GM12878 (cell line): ENCODE measurements at regions of chr14 and their contacts with region 1.

Region 1: GRCh38 chr14:70816525-70816924 is 7.2 kb upstream of the MAP3K9 start:
- DNase-seq: no peak
- ATAC-seq: no peak
- H3K4me3 ChIP-seq: no peak overlapping the region
- H3K27ac ChIP-seq: no peak overlapping the region
- H3K4me1 ChIP-seq: peaks cover 10% of the 10 kb centered on the region
- H3K27me3 ChIP-seq: no peaks in the 10 kb centered on the region
- CTCF ChIP-seq: no peak
- EP300 ChIP-seq: no peak
- POLR2A ChIP-seq: no peak
- RAD21 ChIP-seq: no peak

Region 2: GRCh38 chr14:70378696-70379095 is 437.8 kb before region 1 on chr14:
- CTCF ChIA-PET with region 1: no interaction called
- POLR2A ChIA-PET with region 1: no interaction called
- RAD21 ChIA-PET with region 1: no interaction called
- SMC1A ChIA-PET with region 1: no interaction called
- in situ Hi-C with region 1: no loop called
- intact Hi-C with region 1: no loop called
- DNase-seq: no peak
- ATAC-seq: no peak
- H3K4me3 ChIP-seq: no peak overlapping the region
- H3K27ac ChIP-seq: no peak overlapping the region
- H3K4me1 ChIP-seq: no peaks in the 10 kb centered on the region
- H3K27me3 ChIP-seq: no peaks in the 10 kb centered on the region
- CTCF ChIP-seq: no peak
- EP300 ChIP-seq: no peak
- POLR2A ChIP-seq: no peak
- RAD21 ChIP-seq: no peak

Region 3: DNA sequence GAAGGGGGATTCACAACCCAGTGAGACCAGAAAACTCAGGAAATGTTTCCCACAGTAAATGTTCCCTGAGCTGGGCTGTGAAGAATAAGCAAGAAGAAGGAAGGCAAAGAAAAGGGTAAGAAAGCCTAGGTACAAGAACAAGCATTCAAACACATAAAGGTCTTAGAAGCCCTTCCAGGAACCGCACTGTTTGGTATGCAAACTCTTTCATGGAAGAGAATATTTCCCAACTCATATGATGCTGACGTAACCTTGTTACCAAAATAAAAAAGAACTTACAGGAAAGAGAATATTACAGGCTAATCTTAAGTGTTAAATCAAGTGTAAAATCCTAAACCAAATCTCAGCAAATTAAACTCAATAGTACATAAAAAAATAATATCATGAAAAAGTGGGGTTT is 239.6 kb before region 1 on chr14:
- CTCF ChIA-PET with region 1: no interaction called
- POLR2A ChIA-PET with region 1: no interaction called
- RAD21 ChIA-PET with region 1: no interaction called
- SMC1A ChIA-PET with region 1: no interaction called
- in situ Hi-C with region 1: no loop called
- intact Hi-C with region 1: no loop called
- DNase-seq: no peak
- ATAC-seq: no peak
- H3K4me3 ChIP-seq: no peak overlapping the region
- H3K27ac ChIP-seq: no peak overlapping the region
- H3K4me1 ChIP-seq: no peaks in the 10 kb centered on the region
- H3K27me3 ChIP-seq: no peaks in the 10 kb centered on the region
- CTCF ChIP-seq: no peak
- EP300 ChIP-seq: no peak
- POLR2A ChIP-seq: no peak
- RAD21 ChIP-seq: no peak

Region 4: GRCh38 chr14:70622111-70622712 is 194.3 kb before region 1 on chr14:
- CTCF ChIA-PET with region 1: interaction called, 71 read pairs
- POLR2A ChIA-PET with region 1: no interaction called
- RAD21 ChIA-PET with region 1: interaction called, 6 read pairs
- SMC1A ChIA-PET with region 1: interaction called, 37 read pairs
- in situ Hi-C with region 1: loop called (anchors 5 kb)
- intact Hi-C with region 1: loop called (anchors 1 kb)
- DNase-seq: no peak
- ATAC-seq: peak; percentile 93
- H3K4me3 ChIP-seq: no peak overlapping the region
- H3K27ac ChIP-seq: no peak overlapping the region
- H3K4me1 ChIP-seq: no peaks in the 10 kb centered on the region
- H3K27me3 ChIP-seq: no peaks in the 10 kb centered on the region
- CTCF ChIP-seq: peak; percentile 87 to 91 (median 90)
- EP300 ChIP-seq: no peak
- POLR2A ChIP-seq: no peak
- RAD21 ChIP-seq: peak; percentile 97

Region 5: GRCh38 chr14:70714055-70714621 is 102.4 kb before region 1 on chr14:
- CTCF ChIA-PET with region 1: interaction called, 36 read pairs
- POLR2A ChIA-PET with region 1: no interaction called
- RAD21 ChIA-PET with region 1: interaction called, 16 read pairs
- SMC1A ChIA-PET with region 1: interaction called, 4 read pairs
- in situ Hi-C with region 1: no loop called
- intact Hi-C with region 1: loop called (anchors 1 kb)
- DNase-seq: peak; percentile 50
- ATAC-seq: peak; percentile 63
- H3K4me3 ChIP-seq: no peak overlapping the region; the same call in 1 of the 2 replicates
- H3K27ac ChIP-seq: peak overlapping the region; percentile 52; the same call in 1 of the 2 replicates
- H3K4me1 ChIP-seq: peaks cover 6% of the 10 kb centered on the region
- H3K27me3 ChIP-seq: no peaks in the 10 kb centered on the region
- CTCF ChIP-seq: peak; percentile 42 to 55 (median 51); a peak in 5 of 6 replicates
- EP300 ChIP-seq: no peak
- POLR2A ChIP-seq: no peak
- RAD21 ChIP-seq: peak; percentile 72

Region 6: GRCh38 chr14:70827396-70828151 is 11.0 kb after region 1 on chr14:
- CTCF ChIA-PET with region 1: interaction called, 28 read pairs
- POLR2A ChIA-PET with region 1: no interaction called
- RAD21 ChIA-PET with region 1: interaction called, 9 read pairs
- SMC1A ChIA-PET with region 1: interaction called, 10 read pairs
- in situ Hi-C with region 1: no loop called
- intact Hi-C with region 1: no loop called
- DNase-seq: no peak
- ATAC-seq: no peak
- H3K4me3 ChIP-seq: no peak overlapping the region
- H3K27ac ChIP-seq: no peak overlapping the region
- H3K4me1 ChIP-seq: peaks cover 4% of the 10 kb centered on the region; the same call in 1 of the 2 replicates
- H3K27me3 ChIP-seq: peaks cover 0 to 5% of the 10 kb centered on the region in 2 experiments; a peak in 1 of 4 replicates
- CTCF ChIP-seq: no peak
- EP300 ChIP-seq: no peak
- POLR2A ChIP-seq: no peak
- RAD21 ChIP-seq: no peak

Region 7: GRCh38 chr14:70907176-70907995 is 90.9 kb after region 1 on chr14 and contains the start of gene PCNX1:
- CTCF ChIA-PET with region 1: interaction called, 69 read pairs
- POLR2A ChIA-PET with region 1: interaction called, 3 read pairs
- RAD21 ChIA-PET with region 1: interaction called, 26 read pairs
- SMC1A ChIA-PET with region 1: interaction called, 14 read pairs
- in situ Hi-C with region 1: no loop called
- intact Hi-C with region 1: loop called (anchors 2 kb)
- DNase-seq: no peak
- ATAC-seq: peak; percentile 75
- H3K4me3 ChIP-seq: peak within 1 kb of the TSS; percentile 91
- H3K27ac ChIP-seq: peak within 1 kb of the TSS; percentile 87
- H3K4me1 ChIP-seq: 0 out of 2 replicates have a peak, but pooled peaks cover 5% of the 10 kb centered on the region
- H3K27me3 ChIP-seq: no peaks in the 10 kb centered on the region
- CTCF ChIP-seq: peak; percentile 77 to 89 (median 77); a peak in 5 of 6 replicates
- EP300 ChIP-seq: no peak; a peak in 1 of 4 replicates
- POLR2A ChIP-seq: peak; percentile 72; the same call in 1 of the 2 replicates
- RAD21 ChIP-seq: peak; percentile 73
- polyA plus RNA-seq, gene PCNX1: 4.6 to 5.1 TPM

Region 8: GRCh38 chr14:70972107-70972976 is 155.8 kb after region 1 on chr14:
- CTCF ChIA-PET with region 1: interaction called, 58 read pairs
- POLR2A ChIA-PET with region 1: no interaction called
- RAD21 ChIA-PET with region 1: interaction called, 23 read pairs
- SMC1A ChIA-PET with region 1: interaction called, 35 read pairs
- in situ Hi-C with region 1: loop called (anchors 5 kb)
- intact Hi-C with region 1: loop called (anchors 1 kb)
- DNase-seq: peak; percentile 44
- ATAC-seq: peak; percentile 94
- H3K4me3 ChIP-seq: no peak overlapping the region
- H3K27ac ChIP-seq: no peak overlapping the region
- H3K4me1 ChIP-seq: no peaks in the 10 kb centered on the region
- H3K27me3 ChIP-seq: no peaks in the 10 kb centered on the region
- CTCF ChIP-seq: peak; percentile 79 to 91 (median 83)
- EP300 ChIP-seq: no peak
- POLR2A ChIP-seq: no peak
- RAD21 ChIP-seq: peak; percentile 92